Pancreas (tissue), 10 donors: ENCODE measurements at regions of chr21 and their contacts with region 1.

Region 1: GRCh38 chr21:36927719-36928117 is 38.8 kb downstream of the HLCS start:
- DNase-seq: peak; percentile 66 to 87 (median 80)
- ATAC-seq: peak; percentile 76 to 90 (median 90)
- H3K4me3 ChIP-seq: no peak overlapping the region
- H3K27ac ChIP-seq: no peak overlapping the region
- H3K4me1 ChIP-seq: peaks cover 15 to 23% (median 20%) of the 10 kb centered on the region in 3 donors
- H3K27me3 ChIP-seq: no peaks in the 10 kb centered on the region
- CTCF ChIP-seq: peak; percentile 62 to 91 (median 78)

Region 2: DNA sequence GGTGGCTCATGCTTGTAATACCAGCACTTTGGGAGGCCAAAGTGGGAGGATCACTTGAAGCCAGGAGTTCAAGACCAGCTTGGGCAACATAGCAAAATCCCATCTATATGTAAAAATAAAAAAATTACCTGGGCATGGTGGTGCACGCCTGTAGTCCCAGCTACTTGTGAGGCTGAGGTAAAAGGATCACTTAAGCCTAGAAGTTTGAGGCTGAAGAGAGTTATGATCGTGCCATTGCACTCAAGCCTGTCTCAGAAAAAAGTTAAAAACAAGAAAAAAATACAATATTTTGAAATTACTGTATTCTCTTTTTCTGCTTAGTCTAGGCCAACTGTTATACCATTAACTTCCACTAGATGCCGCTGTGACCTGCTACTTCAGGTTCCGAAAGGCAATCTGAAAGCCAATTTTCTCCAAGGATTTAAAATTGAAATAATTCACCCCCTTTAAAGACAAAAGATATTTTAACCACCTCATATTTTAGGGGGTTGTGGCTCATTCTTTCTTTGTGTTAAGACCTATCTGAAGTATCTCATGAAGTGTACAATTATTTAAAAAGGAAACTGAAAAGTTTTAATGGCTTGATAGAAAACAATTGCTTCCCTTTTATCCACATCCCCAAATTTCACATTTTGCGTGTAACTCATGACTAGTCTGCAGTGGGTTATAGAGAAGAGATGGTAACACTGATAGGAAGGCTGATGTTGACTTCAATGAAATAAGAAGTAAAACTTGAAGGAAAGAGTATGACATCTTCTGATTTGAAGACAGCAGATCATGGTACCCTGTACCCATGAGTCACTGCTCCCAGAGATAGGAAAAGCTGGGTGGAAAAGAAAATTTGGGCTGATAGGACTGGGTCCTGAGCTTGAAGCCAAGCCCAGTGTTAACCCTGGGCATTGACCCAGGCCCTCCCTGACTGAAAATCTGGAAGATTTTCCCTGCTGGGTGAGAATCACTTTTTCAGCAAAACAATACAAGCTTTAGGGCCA is 423.4 kb before region 1 on chr21:
- intact Hi-C with region 1: loop called in 1 of 3 experiments (anchors 10 kb)
- DNase-seq: peak in 1 of 6 donors; percentile 37
- ATAC-seq: peak in 3 of 4 donors; percentile 46 to 80 (median 58)
- H3K4me3 ChIP-seq: no peak overlapping the region
- H3K27ac ChIP-seq: no peak overlapping the region
- H3K4me1 ChIP-seq: no peaks in the 10 kb centered on the region
- H3K27me3 ChIP-seq: no peaks in the 10 kb centered on the region
- CTCF ChIP-seq: peak; percentile 82 to 95 (median 84)

Region 3: DNA sequence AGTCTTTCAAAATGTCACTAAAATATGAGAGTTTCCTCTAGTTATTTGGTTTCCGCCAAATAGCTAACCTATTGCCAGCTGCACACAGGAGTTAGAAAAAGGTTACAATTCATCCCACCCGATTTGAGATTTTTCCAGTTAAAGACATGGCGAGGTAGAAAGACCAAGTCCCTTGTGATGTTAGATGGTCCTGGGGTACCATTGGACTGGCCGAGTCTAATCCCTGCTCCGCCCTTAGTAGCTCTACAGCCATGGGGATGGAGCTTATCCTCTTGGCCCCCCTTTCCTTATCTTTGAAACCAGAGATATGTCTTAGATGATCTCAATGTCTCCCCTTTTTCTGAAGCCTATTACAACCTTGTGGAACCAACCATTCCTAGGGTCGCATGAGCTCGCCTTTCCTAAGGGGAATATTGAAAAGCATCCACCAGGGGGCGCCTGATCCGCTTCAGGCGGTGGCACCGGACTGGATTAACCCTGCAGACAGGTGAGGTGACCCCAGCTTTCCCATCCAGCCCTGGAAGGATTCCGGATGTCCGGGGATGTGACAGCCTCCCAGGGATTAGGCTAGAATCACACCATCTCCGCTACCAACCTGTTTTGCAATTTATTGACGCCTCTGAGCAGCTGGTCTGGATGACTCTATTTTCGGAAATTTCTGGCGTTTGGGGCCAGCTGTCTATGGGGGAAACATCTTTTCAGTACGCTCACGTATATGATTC is 297.1 kb before region 1 on chr21:
- intact Hi-C with region 1: loop called in 1 of 3 experiments (anchors 10 kb)
- DNase-seq: peak in 5 of 6 donors; percentile 22 to 86 (median 65)
- ATAC-seq: peak; percentile 67 to 86 (median 76)
- H3K4me3 ChIP-seq: no peak overlapping the region
- H3K27ac ChIP-seq: no peak overlapping the region
- H3K4me1 ChIP-seq: no peaks in the 10 kb centered on the region
- H3K27me3 ChIP-seq: no peaks in the 10 kb centered on the region
- CTCF ChIP-seq: peak; percentile 58 to 80 (median 69)

Region 4: DNA sequence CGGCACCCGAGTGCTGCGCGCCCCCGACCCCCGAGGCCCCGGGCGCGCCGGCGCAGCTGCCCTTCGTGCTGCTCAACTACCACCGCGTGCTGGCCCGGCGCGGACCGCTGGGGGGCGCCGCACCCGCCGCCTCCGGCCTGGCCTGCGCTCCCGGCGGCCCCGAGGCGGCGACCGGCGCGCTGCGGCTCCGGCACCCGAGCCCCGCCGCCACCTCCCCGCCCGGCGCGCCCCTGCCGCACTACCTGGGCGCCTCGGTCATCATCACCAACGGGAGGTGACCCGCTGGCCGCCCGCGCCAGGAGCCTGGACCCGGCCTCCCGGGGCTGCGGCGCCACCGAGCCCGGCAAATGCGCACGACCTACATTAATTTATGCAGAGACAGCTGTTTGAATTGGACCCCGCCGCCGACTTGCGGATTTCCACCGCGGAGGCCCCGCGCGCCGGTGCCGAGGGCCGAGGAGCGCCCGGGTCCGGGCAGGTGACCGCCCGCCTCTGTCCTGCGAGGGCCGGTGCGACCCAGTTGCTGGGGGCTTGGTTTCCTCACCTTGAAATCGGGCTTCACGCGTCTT is 179.8 kb before region 1 on chr21:
- intact Hi-C with region 1: loop called in 2 of 3 experiments (anchors 10 kb)
- DNase-seq: peak; percentile 48 to 92 (median 66)
- ATAC-seq: peak; percentile 88 to 95 (median 92)
- H3K4me3 ChIP-seq: peak overlapping the region; percentile 18 to 56 (median 31)
- H3K27ac ChIP-seq: no peak overlapping the region
- H3K4me1 ChIP-seq: no peaks in the 10 kb centered on the region
- H3K27me3 ChIP-seq: no peaks in the 10 kb centered on the region
- CTCF ChIP-seq: no peak